Left ventricle myocardium inferior (tissue), 1 donor: ENCODE measurements at regions of chr2 and their contacts with region 1.

Region 1: GRCh38 chr2:53715568-53715967 is 52.0 kb upstream of the CHAC2 start:
- DNase-seq: no peak
- H3K4me3 ChIP-seq: no peak overlapping the region
- H3K27ac ChIP-seq: no peak overlapping the region
- H3K4me1 ChIP-seq: no peaks in the 10 kb centered on the region
- H3K27me3 ChIP-seq: no peaks in the 10 kb centered on the region
- CTCF ChIP-seq: peak; percentile 70

Region 2: GRCh38 chr2:52428224-52428623 is 1287.3 kb before region 1 on chr2:
- intact Hi-C with region 1: no loop called
- DNase-seq: no peak
- H3K4me3 ChIP-seq: no peak overlapping the region
- H3K27ac ChIP-seq: no peak overlapping the region
- H3K4me1 ChIP-seq: no peaks in the 10 kb centered on the region
- H3K27me3 ChIP-seq: no peaks in the 10 kb centered on the region
- CTCF ChIP-seq: no peak

Region 3: GRCh38 chr2:52831216-52831615 is 884.4 kb before region 1 on chr2:
- intact Hi-C with region 1: no loop called
- DNase-seq: no peak
- H3K4me3 ChIP-seq: no peak overlapping the region
- H3K27ac ChIP-seq: no peak overlapping the region
- H3K4me1 ChIP-seq: no peaks in the 10 kb centered on the region
- H3K27me3 ChIP-seq: no peaks in the 10 kb centered on the region
- CTCF ChIP-seq: no peak

Region 4: DNA sequence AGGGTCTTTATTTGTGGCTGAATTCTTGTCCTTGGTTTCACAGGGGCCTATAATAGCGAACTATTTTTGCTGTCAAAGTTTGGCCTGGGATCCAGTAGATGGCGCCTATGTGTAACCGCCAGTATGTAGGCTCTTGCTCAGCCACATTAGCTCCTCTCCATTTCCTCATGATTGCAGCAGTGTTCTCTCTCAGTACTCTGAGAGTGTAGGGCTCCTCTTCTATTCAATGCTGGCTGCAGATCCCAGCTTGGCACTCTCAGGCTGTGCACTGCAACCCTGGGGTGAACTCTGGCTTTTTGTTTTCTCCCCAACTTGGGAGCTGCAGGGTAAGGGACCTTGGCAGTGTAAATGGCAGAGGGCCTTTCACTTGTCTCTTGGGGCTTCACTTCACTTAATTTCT is 292.6 kb before region 1 on chr2:
- intact Hi-C with region 1: loop called (anchors 10 kb)
- DNase-seq: no peak
- H3K4me3 ChIP-seq: no peak overlapping the region
- H3K27ac ChIP-seq: no peak overlapping the region
- H3K4me1 ChIP-seq: no peaks in the 10 kb centered on the region
- H3K27me3 ChIP-seq: no peaks in the 10 kb centered on the region
- CTCF ChIP-seq: peak; percentile 44

Region 5: DNA sequence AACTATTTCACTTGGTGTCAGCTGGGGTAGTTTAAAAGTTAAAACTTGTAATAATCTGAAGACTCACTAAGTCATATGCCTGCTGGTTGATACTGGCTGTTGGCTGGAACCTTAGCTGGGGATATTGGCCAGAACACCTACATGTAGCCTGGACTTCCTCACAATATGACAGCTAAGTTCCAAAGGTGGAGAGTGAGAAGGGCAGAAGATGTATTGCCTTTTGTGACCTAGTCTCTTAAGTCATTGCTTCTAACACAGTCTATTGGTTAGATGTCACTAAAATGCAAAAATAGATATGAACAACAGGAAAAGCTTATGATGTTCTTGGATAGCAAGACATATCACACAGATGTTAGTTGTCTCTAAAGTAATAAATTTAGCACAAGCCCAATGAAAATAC is 61.2 kb before region 1 on chr2:
- intact Hi-C with region 1: no loop called
- DNase-seq: no peak
- H3K4me3 ChIP-seq: no peak overlapping the region
- H3K27ac ChIP-seq: no peak overlapping the region
- H3K4me1 ChIP-seq: no peaks in the 10 kb centered on the region
- H3K27me3 ChIP-seq: no peaks in the 10 kb centered on the region
- CTCF ChIP-seq: no peak

Region 6: DNA sequence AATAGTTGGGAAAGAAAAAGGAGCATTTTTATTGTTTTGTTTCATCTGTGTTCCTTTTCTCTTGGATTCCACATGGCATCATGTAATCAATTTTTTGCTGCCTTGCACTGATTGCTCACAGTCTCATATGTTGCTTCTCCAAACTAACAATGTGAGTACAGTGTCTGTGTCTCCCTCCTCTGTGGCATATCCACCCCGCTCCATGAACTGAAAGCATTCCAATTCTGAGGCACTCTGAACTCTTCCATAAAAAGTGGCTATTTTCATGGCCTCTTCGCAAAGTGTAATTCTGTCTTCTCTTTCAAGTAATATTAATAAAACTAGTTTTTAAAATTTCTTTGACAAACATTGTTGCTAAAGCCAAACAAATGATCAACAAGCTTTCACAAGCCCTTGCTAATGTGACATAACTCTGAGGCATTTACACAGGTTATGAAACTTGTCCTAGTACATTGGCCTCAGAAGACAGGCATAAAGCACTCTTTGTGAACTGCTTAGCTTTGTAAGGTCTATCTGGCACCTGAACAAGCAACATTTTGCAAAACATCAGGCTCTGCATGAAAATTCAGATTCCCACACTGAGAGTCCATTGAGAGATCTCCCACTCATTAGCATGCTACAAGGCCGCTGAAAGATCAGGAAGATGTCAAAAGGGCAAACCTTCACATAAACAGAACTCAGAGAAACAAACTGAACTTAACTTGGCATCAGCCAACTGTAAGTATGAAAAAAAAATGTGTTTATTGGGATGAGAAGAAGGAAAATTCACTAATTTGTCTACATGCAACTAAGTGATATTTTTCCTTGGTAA is 111.2 kb after region 1 on chr2:
- intact Hi-C with region 1: no loop called
- DNase-seq: no peak
- H3K4me3 ChIP-seq: no peak overlapping the region
- H3K27ac ChIP-seq: peak overlapping the region; percentile 74
- H3K4me1 ChIP-seq: peaks cover 44% of the 10 kb centered on the region
- H3K27me3 ChIP-seq: no peaks in the 10 kb centered on the region
- CTCF ChIP-seq: no peak